ENCODE measurements at regions of chr7 and their contacts with region 1.

Region 1: GRCh38 chr7:5450549-5451372 is 27.1 kb upstream of the TNRC18 start:
- H3K4me3 ChIP-seq: no peak overlapping the region
- H3K27ac ChIP-seq: no peak overlapping the region
- H3K4me1 ChIP-seq: no peaks in the 10 kb centered on the region
- CTCF ChIP-seq: peak; percentile 67

Region 2: DNA sequence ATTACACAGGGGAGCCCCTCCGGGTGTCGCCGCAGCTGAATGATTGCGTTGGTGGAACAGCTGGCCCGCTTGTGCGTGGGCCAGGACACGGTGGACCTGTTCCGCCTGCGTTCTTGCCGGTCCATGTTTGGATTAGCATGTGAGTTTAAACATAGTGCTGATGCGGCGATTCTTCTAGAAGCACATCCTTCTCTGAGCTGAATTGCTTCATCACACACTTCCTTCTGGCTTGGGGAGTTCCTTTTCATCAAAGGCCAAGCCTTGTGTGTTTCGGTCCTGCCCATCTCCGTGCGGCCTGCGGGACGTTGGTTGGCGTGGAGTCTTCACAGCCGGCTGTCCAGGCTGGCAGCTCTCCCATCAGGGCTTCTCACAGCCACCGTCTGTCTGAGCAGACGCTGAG is 213.5 kb before region 1 on chr7:
- CTCF ChIA-PET with region 1: interaction called, 13 read pairs
- POLR2A ChIA-PET with region 1: interaction called, 3 read pairs
- H3K4me3 ChIP-seq: no peak overlapping the region
- H3K27ac ChIP-seq: no peak overlapping the region
- H3K4me1 ChIP-seq: no peaks in the 10 kb centered on the region
- CTCF ChIP-seq: no peak

Region 3: DNA sequence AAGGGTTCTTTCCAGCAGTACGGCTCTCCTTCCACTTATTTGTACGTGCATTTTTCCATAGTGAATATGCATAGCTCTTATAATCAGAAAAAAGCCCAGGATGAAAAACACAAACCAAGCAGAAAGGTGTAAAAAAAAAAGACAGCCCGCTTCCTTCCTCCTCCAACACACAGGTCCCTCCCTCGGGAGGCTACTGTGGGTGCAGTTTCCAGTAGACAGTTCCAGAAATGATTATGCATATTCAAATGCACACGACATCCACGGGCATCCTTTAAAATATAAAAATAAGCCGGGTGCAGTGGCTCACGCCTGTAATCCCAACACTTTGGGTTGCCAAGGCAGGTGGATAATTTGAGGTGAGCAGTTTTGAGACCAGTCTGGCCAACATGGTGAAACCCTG is 87.0 kb before region 1 on chr7:
- CTCF ChIA-PET with region 1: interaction called, 27 read pairs
- POLR2A ChIA-PET with region 1: no interaction called
- H3K4me3 ChIP-seq: no peak overlapping the region
- H3K27ac ChIP-seq: no peak overlapping the region
- H3K4me1 ChIP-seq: no peaks in the 10 kb centered on the region
- CTCF ChIP-seq: no peak

Region 4: DNA sequence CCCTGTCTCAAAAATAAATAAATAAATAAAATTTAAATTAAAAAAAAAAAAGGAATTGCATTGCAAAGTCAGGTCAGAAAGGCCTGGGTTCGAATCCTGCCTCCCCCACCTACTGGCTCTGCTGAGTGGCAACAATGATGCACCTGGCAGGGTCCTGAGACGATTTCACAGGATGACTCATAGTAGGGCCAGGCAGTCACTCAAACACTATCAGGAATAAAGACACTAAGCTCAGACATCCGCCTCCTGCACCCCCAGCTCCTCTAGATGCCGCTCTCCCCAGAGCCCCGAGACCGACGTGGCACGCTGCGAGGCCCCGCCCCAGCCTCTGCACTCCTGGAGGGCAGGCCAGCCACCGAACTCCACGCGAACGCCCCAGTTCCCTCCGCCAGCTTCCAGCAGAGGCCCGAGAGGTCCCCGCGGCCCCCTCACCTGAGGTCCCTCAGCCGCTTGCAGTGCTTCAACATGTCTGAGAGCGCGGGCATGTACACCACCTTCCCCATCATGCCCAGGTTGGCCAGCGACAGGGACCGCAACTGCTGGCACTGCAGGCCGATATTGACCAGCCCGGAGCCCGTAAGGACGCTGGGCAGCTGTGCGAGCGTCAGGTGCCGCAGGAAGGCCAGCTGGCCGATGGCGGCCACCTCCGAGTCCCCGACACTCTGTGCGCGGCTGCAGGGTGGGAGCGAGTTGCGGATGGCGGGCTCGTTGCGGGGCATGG is 49.5 kb after region 1 on chr7:
- CTCF ChIA-PET with region 1: no interaction called
- POLR2A ChIA-PET with region 1: no interaction called
- H3K4me3 ChIP-seq: no peak overlapping the region
- H3K27ac ChIP-seq: no peak overlapping the region
- H3K4me1 ChIP-seq: no peaks in the 10 kb centered on the region
- CTCF ChIP-seq: no peak

Measured in HEK293 (cell line).